ENCODE measurements at regions of chr14 and their contacts with region 1.

Region 1: DNA sequence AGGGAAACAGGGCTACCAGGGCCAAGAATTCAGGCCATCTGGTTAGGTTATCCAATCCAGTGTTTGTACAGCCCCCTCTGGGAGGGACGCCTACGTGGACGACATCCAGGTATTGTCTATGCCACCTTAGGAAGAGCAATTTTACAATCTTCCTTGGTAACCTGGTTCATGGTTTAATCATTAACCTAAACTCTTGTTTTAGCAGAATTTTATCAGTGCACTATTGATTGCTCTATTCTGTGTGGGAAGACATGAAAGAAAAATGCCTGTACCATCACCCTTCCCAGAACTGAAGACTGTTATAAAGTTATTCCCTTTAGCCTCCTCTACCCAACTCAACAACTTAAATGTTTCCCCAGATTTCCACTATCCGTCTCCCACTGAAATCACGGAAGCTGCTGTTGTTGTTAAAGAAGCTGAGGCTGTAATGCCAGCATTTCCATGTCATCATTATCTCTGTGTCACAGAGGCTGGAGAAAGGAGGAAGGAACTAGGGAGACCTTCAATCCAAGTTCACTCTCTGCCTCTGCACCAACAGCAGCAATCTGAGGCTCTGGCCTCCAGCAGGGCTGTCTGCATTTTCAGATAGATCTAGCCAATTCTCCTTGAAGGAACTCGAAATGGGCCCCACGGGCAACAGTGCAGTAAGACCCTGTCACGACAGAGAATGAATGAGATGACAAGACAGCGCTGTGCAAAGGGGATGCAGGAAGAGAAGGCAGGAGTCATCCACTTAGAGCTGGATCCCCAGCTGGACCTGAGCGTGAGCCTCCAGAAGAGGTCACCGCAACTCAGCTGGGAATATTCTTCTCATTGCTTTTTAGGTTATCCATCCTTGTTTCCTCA is 183.4 kb upstream of the GZMB start:
- DNase-seq: no peak
- ATAC-seq: peak; percentile 14; the same call in 1 of the 3 replicates
- H3K4me3 ChIP-seq: no peak overlapping the region
- H3K27ac ChIP-seq: no peak overlapping the region
- H3K4me1 ChIP-seq: no peaks in the 10 kb centered on the region
- H3K27me3 ChIP-seq: no peaks in the 10 kb centered on the region; a peak in 1 of 4 replicates
- CTCF ChIP-seq: peak in 1 of 3 experiments; percentile 41; a peak in 2 of 6 replicates
- EP300 ChIP-seq: no peak
- POLR2A ChIP-seq: no peak
- RAD21 ChIP-seq: no peak

Region 2: DNA sequence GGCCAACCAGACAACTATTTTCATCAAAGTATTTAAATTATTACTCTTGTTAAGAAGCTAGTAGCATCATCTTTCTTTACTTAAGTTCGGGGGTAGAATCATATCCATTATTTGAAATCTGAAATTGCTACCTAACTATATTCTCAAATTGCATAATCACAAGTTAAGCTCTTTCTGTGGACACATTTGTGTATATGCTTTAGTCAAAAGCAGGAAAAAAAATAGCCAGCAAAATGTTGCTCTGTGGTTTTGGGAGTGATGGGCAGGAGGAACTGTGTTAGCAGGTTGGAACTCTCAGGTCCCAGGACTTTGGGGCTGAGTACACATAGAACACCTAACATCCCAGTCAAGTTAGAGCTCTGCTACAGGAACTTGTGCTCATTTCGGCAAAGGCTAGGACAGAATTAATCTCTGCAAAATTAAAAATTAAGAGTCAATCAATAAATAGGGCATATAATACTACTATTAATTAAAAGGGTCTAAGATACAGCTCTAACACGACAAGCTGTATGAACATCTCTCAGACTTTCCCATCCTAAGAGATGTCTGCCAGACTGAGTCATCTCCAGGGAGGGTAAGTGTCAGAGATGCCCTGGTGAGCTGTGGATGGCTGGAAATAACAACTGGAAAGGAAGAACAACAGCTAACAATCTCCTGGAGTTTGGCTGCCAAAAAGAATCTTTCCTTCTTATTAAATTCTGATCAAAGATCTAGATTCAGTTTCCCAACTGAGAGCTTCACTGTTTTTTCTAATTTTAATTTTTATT is 20.0 kb after region 1 on chr14:
- CTCF ChIA-PET with region 1: interaction called, 3 read pairs
- POLR2A ChIA-PET with region 1: no interaction called
- RAD21 ChIA-PET with region 1: interaction called, 4 read pairs
- SMC1A ChIA-PET with region 1: interaction called, 14 read pairs
- in situ Hi-C with region 1: no loop called
- intact Hi-C with region 1: no loop called
- DNase-seq: no peak
- ATAC-seq: 0 out of 3 replicates have a peak, but pooled peaks have one; percentile 13
- H3K4me3 ChIP-seq: no peak overlapping the region
- H3K27ac ChIP-seq: no peak overlapping the region
- H3K4me1 ChIP-seq: no peaks in the 10 kb centered on the region
- H3K27me3 ChIP-seq: no peaks in the 10 kb centered on the region
- CTCF ChIP-seq: no peak
- EP300 ChIP-seq: no peak
- POLR2A ChIP-seq: no peak
- RAD21 ChIP-seq: no peak

Region 3: GRCh38 chr14:25113394-25113793 is 296.0 kb after region 1 on chr14:
- CTCF ChIA-PET with region 1: no interaction called
- POLR2A ChIA-PET with region 1: interaction called, 11 read pairs
- RAD21 ChIA-PET with region 1: no interaction called
- SMC1A ChIA-PET with region 1: no interaction called
- in situ Hi-C with region 1: no loop called
- intact Hi-C with region 1: no loop called
- DNase-seq: no peak
- ATAC-seq: no peak
- H3K4me3 ChIP-seq: no peak overlapping the region
- H3K27ac ChIP-seq: no peak overlapping the region
- H3K4me1 ChIP-seq: no peaks in the 10 kb centered on the region
- H3K27me3 ChIP-seq: no peaks in the 10 kb centered on the region
- CTCF ChIP-seq: no peak
- EP300 ChIP-seq: no peak
- POLR2A ChIP-seq: no peak
- RAD21 ChIP-seq: no peak

Measured in GM12878 (cell line).